ENCODE measurements at regions of chr9 and their contacts with region 1.

Region 1: DNA sequence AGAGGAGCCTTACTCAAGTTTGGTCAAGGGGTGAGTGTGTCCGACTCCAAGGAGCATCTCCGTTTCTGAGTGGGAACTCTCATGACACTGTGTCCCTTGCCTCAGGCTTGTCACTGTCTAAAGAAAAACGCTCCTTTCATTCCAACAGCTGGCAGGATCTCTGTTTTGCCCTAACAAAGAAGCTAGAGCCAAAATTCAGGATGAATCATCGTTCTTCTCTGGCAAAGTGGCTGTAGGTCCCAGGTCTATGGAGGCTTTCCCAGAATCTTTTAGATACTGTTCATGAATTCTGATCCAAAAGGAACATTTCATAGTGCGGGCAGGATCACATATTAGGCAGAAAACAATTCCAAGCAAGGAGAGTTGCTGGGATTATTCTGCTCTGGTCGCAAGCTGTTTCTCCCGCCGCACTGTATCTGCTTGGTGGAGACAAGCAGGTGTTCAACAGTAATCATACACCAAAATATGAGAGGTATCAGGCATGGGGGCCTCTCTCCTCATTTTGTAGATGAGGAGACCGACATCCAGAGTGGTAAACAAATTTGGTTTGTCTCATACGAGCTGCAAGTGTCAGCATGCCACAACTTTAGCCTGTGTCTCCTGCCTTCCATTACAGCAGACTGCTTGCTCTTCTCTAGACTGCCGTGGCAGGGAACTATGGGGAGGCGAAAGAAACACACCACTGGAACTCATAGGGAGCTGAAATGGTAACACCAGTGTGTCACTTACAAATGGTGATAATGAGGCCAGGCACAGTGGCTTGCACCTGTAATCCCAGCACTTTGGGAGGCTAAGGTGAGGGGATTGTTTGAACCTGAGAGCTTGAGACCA is 72.6 kb downstream of the ENTREP1 start:
- DNase-seq: no peak
- H3K4me3 ChIP-seq: no peak overlapping the region
- H3K27ac ChIP-seq: peak overlapping the region; percentile 33 to 57
- H3K4me1 ChIP-seq: peaks cover 6% of the 10 kb centered on the region
- H3K27me3 ChIP-seq: no peaks in the 10 kb centered on the region
- CTCF ChIP-seq: no peak
- EP300 ChIP-seq: no peak
- POLR2A ChIP-seq: no peak

Region 2: GRCh38 chr9:69149321-69149807 is 248.2 kb before region 1 on chr9:
- intact Hi-C with region 1: loop called in 1 of 4 experiments (anchors 1 kb)
- DNase-seq: peak in 1 of 5 donors; percentile 23
- H3K4me3 ChIP-seq: no peak overlapping the region
- H3K27ac ChIP-seq: peak overlapping the region in 1 of 2 donors; percentile 17
- H3K4me1 ChIP-seq: peaks cover 2% of the 10 kb centered on the region
- H3K27me3 ChIP-seq: no peaks in the 10 kb centered on the region
- CTCF ChIP-seq: no peak
- EP300 ChIP-seq: no peak
- POLR2A ChIP-seq: no peak

Region 3: DNA sequence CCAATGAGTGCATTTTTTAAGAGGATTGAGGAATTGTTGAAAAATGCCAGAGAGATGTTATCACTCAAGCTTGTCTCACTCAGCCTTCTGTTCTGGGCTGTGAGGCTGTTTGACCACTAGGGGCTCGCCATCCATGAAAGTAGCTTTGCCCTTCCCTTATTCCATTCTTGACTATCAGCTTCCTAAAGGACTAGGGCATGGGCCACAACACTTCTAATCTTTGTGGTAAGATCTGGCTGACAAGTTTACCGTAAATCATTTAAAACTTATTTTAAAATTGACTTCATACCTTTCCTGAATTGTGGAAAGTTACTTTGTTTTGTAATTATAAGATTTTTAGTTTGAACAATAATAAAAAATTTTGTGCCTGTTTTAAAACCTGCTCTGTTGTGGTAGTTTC is 174.0 kb before region 1 on chr9:
- intact Hi-C with region 1: loop called in 1 of 4 experiments (anchors 10 kb)
- DNase-seq: peak in 1 of 5 donors; percentile 51
- H3K4me3 ChIP-seq: no peak overlapping the region
- H3K27ac ChIP-seq: no peak overlapping the region
- H3K4me1 ChIP-seq: peaks cover 5% of the 10 kb centered on the region
- H3K27me3 ChIP-seq: no peaks in the 10 kb centered on the region
- CTCF ChIP-seq: peak; percentile 24 to 53 (median 32)
- EP300 ChIP-seq: no peak
- POLR2A ChIP-seq: no peak

Measured in ovary (tissue), 10 donors.